ENCODE measurements at regions of chr1 and their contacts with region 1.

Region 1: GRCh38 chr1:158998781-158999161 is 10.9 kb upstream of the IFI16 start:
- DNase-seq: peak; percentile 58
- ATAC-seq: peak; percentile 62; the same call in 1 of the 2 replicates
- H3K4me3 ChIP-seq: peak overlapping the region; percentile 26 to 39
- H3K27ac ChIP-seq: no peak overlapping the region
- H3K4me1 ChIP-seq: no peaks in the 10 kb centered on the region
- H3K27me3 ChIP-seq: peaks cover 7% of the 10 kb centered on the region
- CTCF ChIP-seq: peak; percentile 81

Region 2: GRCh38 chr1:157963713-157964112 is 1035.1 kb before region 1 on chr1:
- CTCF ChIA-PET with region 1: no interaction called
- POLR2A ChIA-PET with region 1: no interaction called
- in situ Hi-C with region 1: no loop called
- intact Hi-C with region 1: loop called (anchors 10 kb)
- DNase-seq: peak; percentile 27
- ATAC-seq: peak; percentile 93
- H3K4me3 ChIP-seq: no peak overlapping the region
- H3K27ac ChIP-seq: no peak overlapping the region
- H3K4me1 ChIP-seq: no peaks in the 10 kb centered on the region
- H3K27me3 ChIP-seq: peaks cover 23% of the 10 kb centered on the region
- CTCF ChIP-seq: peak; percentile 92

Region 3: GRCh38 chr1:158203693-158204457 is 794.9 kb before region 1 on chr1:
- CTCF ChIA-PET with region 1: interaction called, 6 read pairs
- POLR2A ChIA-PET with region 1: no interaction called
- in situ Hi-C with region 1: no loop called
- intact Hi-C with region 1: loop called (anchors 1 kb)
- DNase-seq: peak; percentile 33
- ATAC-seq: peak; percentile 95
- H3K4me3 ChIP-seq: no peak overlapping the region
- H3K27ac ChIP-seq: no peak overlapping the region
- H3K4me1 ChIP-seq: no peaks in the 10 kb centered on the region; the same call in 1 of the 2 replicates
- H3K27me3 ChIP-seq: no peaks in the 10 kb centered on the region; the same call in 1 of the 2 replicates
- CTCF ChIP-seq: peak; percentile 78

Region 4: DNA sequence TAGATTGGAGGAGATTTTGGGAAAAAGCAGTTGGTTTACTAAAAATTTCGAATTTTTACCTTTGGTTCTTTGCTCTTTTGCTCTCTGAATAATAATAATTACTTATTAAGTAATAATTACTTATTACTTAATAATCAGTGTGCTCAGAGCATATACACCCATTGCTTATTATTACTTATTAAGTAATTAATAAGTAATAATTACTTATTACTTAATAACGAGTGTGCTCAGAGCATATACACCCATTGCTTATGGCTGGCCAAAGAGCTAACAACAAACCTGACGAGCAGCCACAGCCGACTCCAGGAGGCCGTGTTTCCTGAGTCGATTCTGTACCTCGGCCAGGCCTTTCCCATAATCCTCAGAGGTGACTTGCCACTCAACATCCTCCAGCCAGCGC is 332.7 kb before region 1 on chr1:
- CTCF ChIA-PET with region 1: no interaction called
- POLR2A ChIA-PET with region 1: no interaction called
- in situ Hi-C with region 1: no loop called
- intact Hi-C with region 1: loop called (anchors 10 kb)
- DNase-seq: no peak
- ATAC-seq: no peak
- H3K4me3 ChIP-seq: no peak overlapping the region
- H3K27ac ChIP-seq: no peak overlapping the region
- H3K4me1 ChIP-seq: no peaks in the 10 kb centered on the region
- H3K27me3 ChIP-seq: no peaks in the 10 kb centered on the region
- CTCF ChIP-seq: no peak

Region 5: GRCh38 chr1:160653620-160654016 is 1654.8 kb after region 1 on chr1:
- CTCF ChIA-PET with region 1: no interaction called
- POLR2A ChIA-PET with region 1: no interaction called
- in situ Hi-C with region 1: no loop called
- intact Hi-C with region 1: no loop called
- DNase-seq: no peak
- ATAC-seq: no peak
- H3K4me3 ChIP-seq: no peak overlapping the region
- H3K27ac ChIP-seq: no peak overlapping the region
- H3K4me1 ChIP-seq: no peaks in the 10 kb centered on the region
- H3K27me3 ChIP-seq: peaks cover 4% of the 10 kb centered on the region; the same call in 1 of the 2 replicates
- CTCF ChIP-seq: no peak